A673 (cell line): ENCODE measurements at regions of chr14 and their contacts with region 1.

Region 1: GRCh38 chr14:22570132-22570949 is 18.7 kb downstream of the DAD1 start:
- DNase-seq: peak; percentile 94
- H3K4me3 ChIP-seq: no peak overlapping the region
- H3K27ac ChIP-seq: peak overlapping the region; percentile 45
- H3K4me1 ChIP-seq: peaks cover 20% of the 10 kb centered on the region
- H3K27me3 ChIP-seq: no peaks in the 10 kb centered on the region
- CTCF ChIP-seq: peak; percentile 95

Region 2: GRCh38 chr14:22221508-22221907 is 348.8 kb before region 1 on chr14:
- CTCF ChIA-PET with region 1: no interaction called
- POLR2A ChIA-PET with region 1: no interaction called
- intact Hi-C with region 1: loop called (anchors 10 kb)
- DNase-seq: peak; percentile 56
- H3K4me3 ChIP-seq: no peak overlapping the region
- H3K27ac ChIP-seq: no peak overlapping the region
- H3K4me1 ChIP-seq: peaks cover under 1% of the 10 kb centered on the region
- H3K27me3 ChIP-seq: no peaks in the 10 kb centered on the region
- CTCF ChIP-seq: peak; percentile 70

Region 3: DNA sequence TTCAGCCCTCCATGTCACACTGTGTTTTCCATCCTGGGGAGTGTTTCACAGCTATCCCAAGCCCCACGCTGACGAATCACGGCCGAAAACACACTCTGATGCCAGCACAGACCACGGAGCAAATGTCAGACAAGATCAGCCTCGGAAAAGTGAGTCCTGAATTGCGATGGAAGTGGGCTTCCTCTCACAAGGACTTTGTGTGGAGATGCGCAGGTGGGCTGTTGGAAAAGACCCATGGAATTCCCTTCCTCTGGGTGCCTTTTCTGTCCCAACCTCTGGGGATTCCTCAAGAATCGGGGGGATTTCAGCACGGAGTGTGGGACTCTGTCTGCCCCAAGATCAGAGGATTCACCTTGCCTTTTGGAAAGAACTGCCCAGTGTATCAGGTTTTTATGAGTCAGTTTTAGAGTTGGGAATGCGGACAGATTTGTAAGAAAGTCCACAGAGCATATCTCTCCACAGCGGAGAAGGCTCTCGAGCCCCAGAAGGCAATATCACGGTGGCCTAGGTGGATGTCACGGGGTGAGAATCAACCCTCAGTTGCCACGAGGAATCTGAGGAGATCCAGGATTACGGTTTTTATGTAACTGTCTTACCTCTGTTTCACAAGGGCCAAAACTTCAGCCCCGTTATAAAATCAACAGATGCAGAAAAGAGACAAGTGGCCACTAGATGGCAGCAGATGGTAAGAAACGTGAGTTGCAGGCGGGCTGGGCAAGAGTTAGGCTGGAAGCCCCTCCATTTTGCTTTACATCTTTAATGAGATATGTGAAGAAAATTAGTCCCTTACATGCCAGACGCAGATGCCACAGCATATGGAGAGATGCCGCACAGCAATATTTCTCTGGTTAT is 183.2 kb before region 1 on chr14:
- CTCF ChIA-PET with region 1: interaction called, 23 read pairs
- POLR2A ChIA-PET with region 1: no interaction called
- intact Hi-C with region 1: loop called (anchors 2 kb)
- DNase-seq: peak; percentile 94
- H3K4me3 ChIP-seq: no peak overlapping the region
- H3K27ac ChIP-seq: no peak overlapping the region
- H3K4me1 ChIP-seq: peaks cover 31% of the 10 kb centered on the region
- H3K27me3 ChIP-seq: no peaks in the 10 kb centered on the region
- CTCF ChIP-seq: peak; percentile 87

Region 4: GRCh38 chr14:22448905-22449599 is 121.3 kb before region 1 on chr14:
- CTCF ChIA-PET with region 1: no interaction called
- POLR2A ChIA-PET with region 1: no interaction called
- intact Hi-C with region 1: no loop called
- DNase-seq: no peak
- H3K4me3 ChIP-seq: no peak overlapping the region
- H3K27ac ChIP-seq: no peak overlapping the region
- H3K4me1 ChIP-seq: no peaks in the 10 kb centered on the region
- H3K27me3 ChIP-seq: no peaks in the 10 kb centered on the region
- CTCF ChIP-seq: no peak

Region 5: DNA sequence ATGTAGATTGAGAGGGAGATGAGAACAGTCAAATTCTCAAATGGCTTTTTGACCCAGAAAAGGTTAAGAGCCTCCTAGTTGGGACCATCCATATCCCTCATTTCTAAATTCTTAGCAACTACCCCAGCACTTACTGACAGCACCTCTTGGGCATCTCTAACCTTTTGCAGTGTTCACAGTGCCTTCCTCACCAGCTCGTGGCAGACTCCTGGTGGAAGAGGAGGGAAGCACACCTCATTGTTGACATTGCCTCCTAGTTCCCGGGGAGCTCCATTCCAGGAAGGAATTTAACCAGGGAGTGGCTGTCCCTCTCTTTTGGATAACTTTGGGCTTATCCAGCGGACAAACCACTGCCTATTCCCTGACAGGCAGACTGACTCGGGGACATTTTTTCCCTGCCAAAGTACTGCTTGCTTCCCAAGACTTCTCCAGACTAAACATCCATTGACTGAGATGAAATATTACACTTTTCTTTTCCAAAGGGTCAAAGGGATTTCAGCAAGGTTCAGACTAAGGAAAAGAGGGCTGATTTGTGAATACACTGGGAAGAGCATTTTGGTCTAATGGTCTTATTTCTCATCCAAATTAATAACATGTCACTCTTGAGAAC is 82.8 kb after region 1 on chr14:
- CTCF ChIA-PET with region 1: interaction called, 38 read pairs
- POLR2A ChIA-PET with region 1: no interaction called
- intact Hi-C with region 1: loop called (anchors 1 kb)
- DNase-seq: peak; percentile 80
- H3K4me3 ChIP-seq: no peak overlapping the region
- H3K27ac ChIP-seq: no peak overlapping the region
- H3K4me1 ChIP-seq: peaks cover 14% of the 10 kb centered on the region
- H3K27me3 ChIP-seq: no peaks in the 10 kb centered on the region
- CTCF ChIP-seq: peak; percentile 89

Region 6: GRCh38 chr14:22822571-22823098 is 252.3 kb after region 1 on chr14:
- CTCF ChIA-PET with region 1: interaction called, 11 read pairs
- POLR2A ChIA-PET with region 1: interaction called, 3 read pairs
- intact Hi-C with region 1: no loop called
- DNase-seq: peak; percentile 93
- H3K4me3 ChIP-seq: peak overlapping the region; percentile 29
- H3K27ac ChIP-seq: peak overlapping the region; percentile 8
- H3K4me1 ChIP-seq: peaks cover 25% of the 10 kb centered on the region
- H3K27me3 ChIP-seq: no peaks in the 10 kb centered on the region
- CTCF ChIP-seq: peak; percentile 93

Region 7: DNA sequence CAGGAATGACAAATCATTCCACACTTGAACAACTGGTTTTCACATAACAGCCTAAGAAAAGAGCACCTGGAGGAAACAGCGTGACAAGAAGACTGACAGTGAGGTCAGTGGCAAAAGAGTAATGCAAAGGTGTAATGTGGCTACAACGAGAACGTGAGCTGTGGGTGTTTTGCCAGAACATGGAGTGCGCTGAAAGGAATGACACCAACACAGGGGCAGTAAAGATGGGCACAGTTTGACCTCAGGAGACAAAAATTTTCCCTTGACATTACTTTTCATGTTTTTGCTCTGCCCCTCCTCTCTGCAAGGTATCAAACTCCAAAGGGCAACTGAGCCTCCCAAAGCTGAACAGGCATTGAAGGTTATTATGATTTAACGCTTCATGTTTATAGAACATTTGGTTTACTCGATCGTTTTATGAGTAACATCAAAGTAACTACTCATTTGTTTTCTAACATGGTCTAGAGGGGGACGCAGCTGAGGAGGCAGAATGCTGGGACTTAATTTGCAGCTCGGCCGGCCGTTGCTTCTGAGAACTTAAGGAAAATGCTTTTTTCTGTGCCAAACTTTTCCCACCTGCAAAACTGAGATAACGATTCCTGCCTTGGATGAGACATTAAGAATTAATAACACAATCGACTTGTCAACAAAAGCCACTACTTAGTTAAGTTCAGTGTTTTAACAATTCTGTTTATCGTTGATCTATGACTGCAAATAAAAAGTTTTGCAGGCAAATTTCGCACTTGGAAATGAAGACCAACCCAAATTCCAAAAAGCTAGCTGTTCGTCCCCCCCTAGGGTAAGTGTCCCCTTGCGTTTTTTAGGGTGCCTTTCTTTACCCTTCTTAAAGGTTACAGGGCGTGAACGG is 385.6 kb after region 1 on chr14:
- CTCF ChIA-PET with region 1: no interaction called
- POLR2A ChIA-PET with region 1: interaction called, 11 read pairs
- intact Hi-C with region 1: no loop called
- DNase-seq: no peak
- H3K4me3 ChIP-seq: peak overlapping the region; percentile 88
- H3K27ac ChIP-seq: peak overlapping the region; percentile 96
- H3K4me1 ChIP-seq: peaks cover 6% of the 10 kb centered on the region
- H3K27me3 ChIP-seq: no peaks in the 10 kb centered on the region
- CTCF ChIP-seq: no peak